ENCODE measurements at regions of chr1 and their contacts with region 1.

Region 1: DNA sequence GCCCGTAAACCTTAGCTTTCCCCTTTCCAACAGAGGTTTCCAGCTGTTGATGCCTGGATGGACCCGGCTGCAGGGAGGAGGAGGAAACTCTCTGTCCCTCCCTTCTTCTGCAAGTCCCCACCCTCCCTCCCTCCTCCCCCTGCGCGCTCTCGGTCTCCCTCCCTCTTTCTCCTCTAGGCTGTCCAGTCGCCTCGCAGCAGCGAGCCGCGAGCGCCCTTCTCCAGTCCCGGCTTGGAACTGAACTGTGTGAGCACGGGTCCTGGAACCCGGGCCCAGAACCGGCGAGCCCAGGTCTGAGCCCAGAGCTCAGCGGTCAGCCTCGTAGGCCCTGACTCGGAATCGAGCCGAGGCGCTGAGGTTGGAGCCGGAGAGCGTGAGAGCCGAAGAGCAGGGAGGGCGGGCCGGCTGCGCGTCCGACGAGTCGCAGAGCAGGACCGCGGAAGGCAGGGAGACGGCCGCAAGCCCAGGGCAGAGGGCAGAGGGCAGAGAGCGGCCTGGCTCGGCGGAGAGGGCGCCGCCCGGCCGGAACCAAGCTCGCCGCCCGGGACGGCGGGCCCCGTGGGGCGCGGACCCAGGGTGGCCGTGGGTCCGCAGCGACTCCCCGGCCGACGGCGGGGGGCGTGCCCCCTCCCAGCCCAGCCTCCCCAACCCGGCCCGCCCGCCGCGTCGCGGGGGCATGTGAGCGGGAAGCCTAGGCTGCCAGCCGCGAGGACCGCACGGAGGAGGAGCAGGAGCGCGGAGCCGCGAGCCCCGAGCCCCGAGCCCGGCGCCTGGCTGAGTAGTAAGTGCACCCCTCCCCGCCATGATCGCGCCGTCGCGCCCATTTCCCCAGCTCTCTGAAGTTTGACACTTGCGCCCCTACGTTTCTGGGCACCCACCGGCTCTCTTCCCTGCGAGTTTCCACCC is at the start of gene SOX13:
- DNase-seq: peak; percentile 88 to 92 (median 90)
- ATAC-seq: peak; percentile 85 to 90 (median 86)
- H3K4me3 ChIP-seq: peak within 1 kb of the TSS; percentile 68 to 93 (median 82)
- H3K27ac ChIP-seq: peak within 1 kb of the TSS; percentile 77 to 95 (median 90)
- H3K4me1 ChIP-seq: peaks cover 0 to 53% (median 23%) of the 10 kb centered on the region in 12 donors
- H3K27me3 ChIP-seq: peaks cover 0 to 49% (median 0%) of the 10 kb centered on the region in 9 donors
- CTCF ChIP-seq: peak in 6 of 12 donors; percentile 13 to 43 (median 32)
- POLR2A ChIP-seq: peak in 1 of 2 donors; percentile 86
- total RNA-seq, gene SOX13: 8.8 to 16.0 (median 13.0) TPM

Region 2: GRCh38 chr1:203871107-203871875 is 201.9 kb before region 1 on chr1:
- intact Hi-C with region 1: loop called in 7 of 10 experiments (anchors 1 to 10 kb)
- DNase-seq: peak in 2 of 5 donors; percentile 37 to 57
- ATAC-seq: peak in 3 of 4 donors; percentile 79 to 89 (median 82)
- H3K4me3 ChIP-seq: no peak overlapping the region
- H3K27ac ChIP-seq: peak overlapping the region in 5 of 12 donors; percentile 18 to 61 (median 33)
- H3K4me1 ChIP-seq: peaks cover 0 to 18% (median 9%) of the 10 kb centered on the region in 12 donors
- H3K27me3 ChIP-seq: no peaks in the 10 kb centered on the region
- CTCF ChIP-seq: peak; percentile 62 to 89 (median 79)
- POLR2A ChIP-seq: no peak

Region 3: DNA sequence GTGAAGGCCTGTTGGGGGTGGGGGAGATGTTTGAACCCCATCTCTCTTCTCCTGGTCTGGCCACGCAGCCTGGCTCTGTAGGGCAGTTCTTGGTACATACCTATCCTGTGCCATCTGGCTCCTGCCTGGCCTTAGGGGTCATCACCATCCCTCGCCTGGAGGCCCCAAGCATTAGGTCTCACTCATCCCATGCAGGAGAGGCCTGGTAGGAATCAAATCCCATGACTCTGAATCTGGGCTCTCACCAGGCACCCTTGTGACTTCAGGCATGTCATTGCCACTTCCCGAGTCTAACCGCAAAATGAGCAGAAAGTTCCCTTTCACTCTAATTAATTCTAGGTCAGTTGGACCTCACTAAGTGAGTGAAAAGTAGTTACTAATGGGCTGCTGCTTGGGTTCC is 41.4 kb after region 1 on chr1:
- intact Hi-C with region 1: loop called in 1 of 10 experiments (anchors 5 kb)
- DNase-seq: peak in 1 of 5 donors; percentile 33
- ATAC-seq: no peak
- H3K4me3 ChIP-seq: no peak overlapping the region
- H3K27ac ChIP-seq: peak overlapping the region in 1 of 12 donors; percentile 20
- H3K4me1 ChIP-seq: peaks cover 0 to 19% (median 4%) of the 10 kb centered on the region in 12 donors
- H3K27me3 ChIP-seq: no peaks in the 10 kb centered on the region
- CTCF ChIP-seq: no peak
- POLR2A ChIP-seq: no peak

Region 4: GRCh38 chr1:204607910-204608309 is 534.7 kb after region 1 on chr1:
- intact Hi-C with region 1: no loop called
- DNase-seq: no peak
- ATAC-seq: no peak
- H3K4me3 ChIP-seq: no peak overlapping the region
- H3K27ac ChIP-seq: no peak overlapping the region
- H3K4me1 ChIP-seq: no peaks in the 10 kb centered on the region
- H3K27me3 ChIP-seq: peaks cover 0 to 17% (median 0%) of the 10 kb centered on the region in 9 donors
- CTCF ChIP-seq: no peak
- POLR2A ChIP-seq: no peak